ENCODE measurements at regions of chr12 and their contacts with region 1.

Region 1: GRCh38 chr12:52582971-52583456 is 9.4 kb upstream of the KRT74 start:
- DNase-seq: no peak
- H3K4me3 ChIP-seq: no peak overlapping the region
- H3K27ac ChIP-seq: no peak overlapping the region
- H3K4me1 ChIP-seq: no peaks in the 10 kb centered on the region
- H3K27me3 ChIP-seq: peaks cover 0 to 7% (median 0%) of the 10 kb centered on the region in 4 donors
- CTCF ChIP-seq: peak; percentile 71 to 84 (median 71)
- EP300 ChIP-seq: no peak
- POLR2A ChIP-seq: no peak

Region 2: GRCh38 chr12:52691076-52691840 is 108.2 kb after region 1 on chr12:
- intact Hi-C with region 1: no loop called
- DNase-seq: no peak
- H3K4me3 ChIP-seq: peak overlapping the region; percentile 44 to 52 (median 44)
- H3K27ac ChIP-seq: no peak overlapping the region
- H3K4me1 ChIP-seq: peaks cover 10 to 19% (median 15%) of the 10 kb centered on the region in 4 donors
- H3K27me3 ChIP-seq: peaks cover 0 to 64% (median 0%) of the 10 kb centered on the region in 4 donors
- CTCF ChIP-seq: no peak
- EP300 ChIP-seq: no peak
- POLR2A ChIP-seq: no peak

Region 3: DNA sequence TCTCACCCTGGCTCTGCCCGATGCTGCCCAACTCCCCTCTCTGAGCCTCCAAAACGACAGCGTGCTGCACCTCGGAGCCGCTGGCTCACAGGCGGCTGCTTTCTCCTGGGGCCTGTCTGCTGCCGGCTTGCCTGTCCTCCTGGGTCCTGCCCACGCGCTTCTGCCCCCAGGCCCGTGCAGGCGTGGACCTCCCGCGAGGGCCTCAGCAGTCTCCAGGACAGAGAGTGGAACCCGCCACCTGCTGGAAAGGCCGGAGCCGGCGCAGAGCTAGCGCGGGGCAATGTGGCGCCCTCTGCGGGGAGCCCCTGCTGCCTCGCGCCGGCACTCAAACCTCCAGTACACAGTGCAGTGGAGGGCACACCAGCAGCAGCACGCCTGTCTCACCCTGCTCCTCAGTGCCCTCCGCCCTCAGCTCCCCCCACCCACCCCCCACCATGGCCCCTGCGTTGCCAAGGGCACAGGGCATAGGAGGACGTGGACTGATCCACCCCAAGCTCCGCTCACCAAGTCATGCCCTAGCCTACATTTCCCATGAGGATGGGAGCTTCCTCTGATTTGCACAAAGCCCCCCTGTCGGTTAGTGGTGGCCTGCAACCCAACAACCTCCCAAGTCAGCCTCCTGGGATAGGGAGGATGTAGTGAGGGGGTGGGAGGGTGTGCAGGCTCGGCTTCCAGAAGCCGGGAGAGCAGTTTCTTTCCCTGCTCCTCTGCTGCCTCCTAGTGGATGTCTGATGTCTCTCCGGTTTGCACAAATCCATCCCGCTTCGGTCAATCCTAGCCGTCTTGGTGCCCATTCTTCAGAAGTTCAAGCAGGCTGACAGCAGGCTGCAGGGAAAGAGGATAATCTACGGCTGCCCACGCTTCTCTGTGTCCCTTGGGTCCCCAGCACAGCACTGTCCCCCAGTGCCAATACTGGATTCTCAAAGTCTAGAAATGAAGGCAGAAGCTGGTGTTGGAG is 296.7 kb after region 1 on chr12:
- intact Hi-C with region 1: loop called (anchors 1 kb)
- DNase-seq: no peak
- H3K4me3 ChIP-seq: peak overlapping the region; percentile 40 to 53 (median 42)
- H3K27ac ChIP-seq: peak overlapping the region in 3 of 4 donors; percentile 14 to 34 (median 17)
- H3K4me1 ChIP-seq: peaks cover 10 to 25% (median 20%) of the 10 kb centered on the region in 4 donors
- H3K27me3 ChIP-seq: peaks cover 0 to 16% (median 0%) of the 10 kb centered on the region in 4 donors
- CTCF ChIP-seq: peak; percentile 60 to 81 (median 67)
- EP300 ChIP-seq: no peak
- POLR2A ChIP-seq: no peak